B cell (primary cell): ENCODE measurements at regions of chr10 and their contacts with region 1.

Region 1: DNA sequence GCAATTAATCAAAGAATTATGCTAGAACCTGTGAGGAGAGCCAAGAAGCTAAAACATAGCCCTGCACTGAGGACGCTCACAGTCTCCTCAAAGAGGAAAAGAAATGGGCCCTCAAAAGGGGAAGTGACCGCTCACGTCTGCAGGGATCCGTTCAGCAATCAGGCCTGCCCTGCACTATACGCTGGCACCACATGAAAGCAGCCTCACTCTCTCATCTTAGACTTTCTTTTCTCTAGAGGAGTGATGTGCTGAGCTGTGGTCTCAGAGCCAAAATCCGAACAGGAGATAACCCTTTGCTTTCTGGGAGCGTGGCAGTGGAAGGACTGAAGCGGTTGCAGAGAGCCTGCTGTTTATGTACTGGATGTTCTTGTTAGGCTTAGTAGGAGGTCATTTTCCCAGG is 6.3 kb upstream of the IL2RA start:
- DNase-seq: peak; percentile 79
- ATAC-seq: peak; percentile 69
- H3K4me3 ChIP-seq: peak overlapping the region in 2 of 5 experiments; percentile 19 to 40
- H3K4me3 Mint-ChIP-seq: peak overlapping the region; percentile 85
- H3K27ac ChIP-seq: peak overlapping the region; percentile 80 to 91
- H3K27ac Mint-ChIP-seq: peak overlapping the region; percentile 99
- H3K4me1 ChIP-seq: peaks cover 59 to 64% of the 10 kb centered on the region in 2 donors
- H3K4me1 Mint-ChIP-seq: peaks cover 83% of the 10 kb centered on the region
- H3K27me3 ChIP-seq: no peaks in the 10 kb centered on the region
- H3K27me3 Mint-ChIP-seq: no peaks in the 10 kb centered on the region
- CTCF ChIP-seq: no peak

Region 2: DNA sequence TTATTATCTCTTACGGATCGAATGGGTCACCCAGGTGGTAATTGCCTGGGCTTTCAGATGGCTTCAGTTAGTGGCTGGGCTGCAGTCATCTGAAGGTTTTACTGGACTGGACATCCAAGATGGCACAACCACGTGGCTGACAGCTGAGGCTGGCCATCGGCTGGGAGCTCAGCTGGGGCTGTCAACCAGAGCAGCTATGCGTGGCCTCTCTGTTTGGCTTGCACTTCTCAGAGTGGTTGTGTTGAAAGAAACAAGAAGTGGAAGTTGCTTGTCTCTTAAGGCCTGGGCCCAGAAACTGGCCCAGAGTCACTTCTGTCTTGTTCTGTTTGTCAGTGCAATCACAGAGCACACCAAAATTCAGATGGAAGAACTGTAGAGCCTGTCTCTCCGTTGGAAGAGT is 249.5 kb before region 1 on chr10:
- CTCF ChIA-PET with region 1: no interaction called
- POLR2A ChIA-PET with region 1: interaction called, 13 read pairs
- intact Hi-C with region 1: no loop called
- DNase-seq: peak; percentile 72
- ATAC-seq: peak; percentile 54
- H3K4me3 ChIP-seq: peak overlapping the region in 1 of 5 experiments; percentile 4
- H3K4me3 Mint-ChIP-seq: peak overlapping the region; percentile 78
- H3K27ac ChIP-seq: peak overlapping the region; percentile 89 to 94
- H3K27ac Mint-ChIP-seq: peak overlapping the region; percentile 98
- H3K4me1 ChIP-seq: peaks cover 65 to 77% of the 10 kb centered on the region in 2 donors
- H3K4me1 Mint-ChIP-seq: peaks cover 64% of the 10 kb centered on the region
- H3K27me3 ChIP-seq: no peaks in the 10 kb centered on the region
- H3K27me3 Mint-ChIP-seq: no peaks in the 10 kb centered on the region
- CTCF ChIP-seq: no peak

Region 3: GRCh38 chr10:5904227-5904626 is 164.2 kb before region 1 on chr10:
- CTCF ChIA-PET with region 1: no interaction called
- POLR2A ChIA-PET with region 1: no interaction called
- intact Hi-C with region 1: no loop called
- DNase-seq: no peak
- ATAC-seq: no peak
- H3K4me3 ChIP-seq: no peak overlapping the region
- H3K4me3 Mint-ChIP-seq: no peak overlapping the region
- H3K27ac ChIP-seq: no peak overlapping the region
- H3K27ac Mint-ChIP-seq: no peak overlapping the region
- H3K4me1 ChIP-seq: peaks cover 5 to 7% of the 10 kb centered on the region in 2 donors
- H3K4me1 Mint-ChIP-seq: peaks cover 17% of the 10 kb centered on the region
- H3K27me3 ChIP-seq: no peaks in the 10 kb centered on the region
- H3K27me3 Mint-ChIP-seq: no peaks in the 10 kb centered on the region
- CTCF ChIP-seq: no peak

Region 4: DNA sequence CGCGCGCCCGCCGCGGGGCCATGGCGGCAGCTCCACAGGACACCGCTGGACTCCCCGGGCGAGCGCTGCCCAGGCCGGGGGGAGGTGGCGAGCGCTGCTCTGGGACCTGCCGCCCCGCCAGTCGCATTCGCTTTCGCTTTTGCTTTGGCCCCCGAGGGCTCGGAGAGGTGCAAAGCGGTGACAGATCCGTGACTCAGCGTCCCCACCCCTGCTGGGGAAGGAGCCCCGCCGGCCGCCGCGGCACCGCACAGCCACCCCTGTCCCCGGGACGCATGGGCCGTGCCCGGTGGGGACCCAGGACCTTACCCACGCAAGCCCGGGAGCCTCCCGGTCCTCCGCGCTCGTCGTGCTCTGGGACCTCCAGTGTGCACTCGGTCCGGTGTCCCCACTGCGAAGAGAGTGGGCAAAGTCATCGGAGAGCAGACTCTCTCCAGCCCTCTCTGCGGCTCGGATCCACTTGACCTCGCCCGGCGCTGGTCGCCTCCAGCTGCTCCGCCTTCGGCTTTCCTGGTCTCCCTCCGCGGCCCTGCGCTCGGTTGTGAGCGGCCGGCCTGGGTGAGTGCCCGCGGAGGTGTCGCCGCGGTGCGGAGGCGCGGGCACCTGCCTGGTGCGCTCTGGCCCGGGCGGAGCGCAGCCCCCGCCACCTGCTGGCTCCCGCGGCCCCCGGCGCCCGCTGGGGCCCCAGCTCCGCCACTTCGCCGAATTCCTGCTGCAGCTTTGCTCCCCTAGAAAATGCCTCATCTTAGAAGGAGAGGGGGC is 90.8 kb before region 1 on chr10 and contains the start of gene IL15RA:
- CTCF ChIA-PET with region 1: no interaction called
- POLR2A ChIA-PET with region 1: no interaction called
- intact Hi-C with region 1: loop called (anchors 5 kb)
- DNase-seq: peak; percentile 88
- ATAC-seq: peak; percentile 77
- H3K4me3 ChIP-seq: peak within 1 kb of the TSS; percentile 74 to 96 (median 93)
- H3K4me3 Mint-ChIP-seq: peak within 1 kb of the TSS; percentile 90
- H3K27ac ChIP-seq: peak within 1 kb of the TSS; percentile 65 to 75
- H3K27ac Mint-ChIP-seq: peak within 1 kb of the TSS; percentile 95
- H3K4me1 ChIP-seq: peaks cover 8 to 27% of the 10 kb centered on the region in 2 donors
- H3K4me1 Mint-ChIP-seq: peaks cover 29% of the 10 kb centered on the region
- H3K27me3 ChIP-seq: peaks cover 0 to 3% (median 0%) of the 10 kb centered on the region in 4 experiments
- H3K27me3 Mint-ChIP-seq: no peaks in the 10 kb centered on the region
- CTCF ChIP-seq: peak; percentile 43
- total RNA-seq, gene IL15RA: 6.8 and 9.3 TPM in 2 replicates

Region 5: GRCh38 chr10:6056411-6057135 is 11.8 kb before region 1 on chr10:
- CTCF ChIA-PET with region 1: interaction called, 65 read pairs
- POLR2A ChIA-PET with region 1: interaction called, 43 read pairs
- intact Hi-C with region 1: loop called (anchors 1 kb)
- DNase-seq: no peak
- ATAC-seq: no peak
- H3K4me3 ChIP-seq: no peak overlapping the region
- H3K4me3 Mint-ChIP-seq: peak overlapping the region; percentile 97
- H3K27ac ChIP-seq: peak overlapping the region; percentile 17 to 27
- H3K27ac Mint-ChIP-seq: peak overlapping the region; percentile 89
- H3K4me1 ChIP-seq: peaks cover 66 to 78% of the 10 kb centered on the region in 2 donors
- H3K4me1 Mint-ChIP-seq: peaks cover 84% of the 10 kb centered on the region
- H3K27me3 ChIP-seq: no peaks in the 10 kb centered on the region
- H3K27me3 Mint-ChIP-seq: no peaks in the 10 kb centered on the region
- CTCF ChIP-seq: no peak